GM12878 (cell line): ENCODE measurements at regions of chr12 and their contacts with region 1.

Region 1: GRCh38 chr12:104057771-104058197 is 6.5 kb upstream of the HCFC2 start:
- DNase-seq: no peak
- ATAC-seq: peak; percentile 68
- H3K4me3 ChIP-seq: no peak overlapping the region
- H3K27ac ChIP-seq: no peak overlapping the region
- H3K4me1 ChIP-seq: no peaks in the 10 kb centered on the region
- H3K27me3 ChIP-seq: peaks cover 0 to 2% of the 10 kb centered on the region in 2 experiments; a peak in 2 of 4 replicates
- CTCF ChIP-seq: peak; percentile 71 to 77 (median 75)
- EP300 ChIP-seq: no peak
- POLR2A ChIP-seq: no peak
- RAD21 ChIP-seq: peak; percentile 83

Region 2: GRCh38 chr12:103877934-103878510 is 179.8 kb before region 1 on chr12:
- CTCF ChIA-PET with region 1: interaction called, 8 read pairs
- POLR2A ChIA-PET with region 1: no interaction called
- RAD21 ChIA-PET with region 1: no interaction called
- SMC1A ChIA-PET with region 1: interaction called, 4 read pairs
- in situ Hi-C with region 1: no loop called
- intact Hi-C with region 1: loop called (anchors 2 kb)
- DNase-seq: peak; percentile 49
- ATAC-seq: peak; percentile 66
- H3K4me3 ChIP-seq: no peak overlapping the region
- H3K27ac ChIP-seq: no peak overlapping the region
- H3K4me1 ChIP-seq: peaks cover 31% of the 10 kb centered on the region
- H3K27me3 ChIP-seq: no peaks in the 10 kb centered on the region
- CTCF ChIP-seq: peak; percentile 74 to 79 (median 77)
- EP300 ChIP-seq: no peak
- POLR2A ChIP-seq: no peak
- RAD21 ChIP-seq: peak; percentile 92

Region 3: GRCh38 chr12:104046306-104046705 is 11.5 kb before region 1 on chr12:
- CTCF ChIA-PET with region 1: interaction called, 12 read pairs
- POLR2A ChIA-PET with region 1: no interaction called
- RAD21 ChIA-PET with region 1: interaction called, 3 read pairs
- SMC1A ChIA-PET with region 1: no interaction called
- in situ Hi-C with region 1: no loop called
- intact Hi-C with region 1: no loop called
- DNase-seq: no peak
- ATAC-seq: no peak
- H3K4me3 ChIP-seq: no peak overlapping the region
- H3K27ac ChIP-seq: no peak overlapping the region
- H3K4me1 ChIP-seq: no peaks in the 10 kb centered on the region
- H3K27me3 ChIP-seq: peaks cover 0 to 4% of the 10 kb centered on the region in 2 experiments; a peak in 3 of 4 replicates
- CTCF ChIP-seq: no peak
- EP300 ChIP-seq: no peak
- POLR2A ChIP-seq: no peak
- RAD21 ChIP-seq: no peak

Region 4: DNA sequence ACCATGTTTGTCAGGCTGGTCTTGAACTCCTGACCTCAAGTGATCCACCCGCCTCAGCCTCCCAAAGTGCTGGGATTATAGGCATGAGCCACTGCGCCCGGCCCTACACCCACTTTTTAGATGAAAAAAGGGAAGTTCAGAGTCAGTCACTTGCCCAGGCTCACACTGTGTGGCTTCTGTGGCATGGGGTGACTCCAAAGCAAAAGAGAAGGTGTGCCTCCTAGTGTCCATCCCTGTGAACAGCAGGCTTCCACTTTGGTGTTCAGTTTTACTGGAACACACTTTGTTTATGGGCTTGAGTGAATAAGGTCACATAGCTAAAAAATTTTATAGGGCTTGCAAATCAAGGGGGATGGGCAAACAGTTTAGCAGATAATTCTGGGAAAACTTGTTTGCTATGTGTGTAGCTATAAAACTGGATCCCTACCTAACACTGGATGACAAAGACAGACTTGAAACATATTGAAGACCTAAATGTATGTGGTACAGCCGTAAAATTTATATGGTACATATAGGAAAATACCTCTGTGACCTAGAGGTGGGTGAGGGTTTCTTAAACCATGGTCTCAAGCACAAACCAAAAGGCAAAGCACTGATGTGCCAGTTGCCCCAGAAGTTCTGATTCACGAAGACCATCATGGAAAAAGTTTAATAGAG is 300.7 kb after region 1 on chr12:
- CTCF ChIA-PET with region 1: interaction called, 6 read pairs
- POLR2A ChIA-PET with region 1: no interaction called
- RAD21 ChIA-PET with region 1: no interaction called
- SMC1A ChIA-PET with region 1: no interaction called
- in situ Hi-C with region 1: no loop called
- intact Hi-C with region 1: loop called (anchors 10 kb)
- DNase-seq: peak; percentile 44
- ATAC-seq: peak; percentile 96
- H3K4me3 ChIP-seq: no peak overlapping the region
- H3K27ac ChIP-seq: no peak overlapping the region
- H3K4me1 ChIP-seq: no peaks in the 10 kb centered on the region
- H3K27me3 ChIP-seq: no peaks in the 10 kb centered on the region
- CTCF ChIP-seq: peak; percentile 91 to 96 (median 92)
- EP300 ChIP-seq: no peak
- POLR2A ChIP-seq: no peak
- RAD21 ChIP-seq: peak; percentile 90